Activated CD8-positive, alpha-beta T cell treated with anti-CD3 and anti-CD28 coated beads, Interleukin-2, amount 10 ng/mL, durations not matched to agents 7 days and 5 days (primary cell): ENCODE measurements at regions of chr1 and their contacts with region 1.

Region 1: GRCh38 chr1:168520052-168520751 is 23.6 kb downstream of the XCL2 start:
- DNase-seq: peak; percentile 85
- ATAC-seq: peak; percentile 89
- H3K4me3 Mint-ChIP-seq: peak overlapping the region; percentile 80
- H3K27ac Mint-ChIP-seq: peak overlapping the region; percentile 91
- H3K4me1 Mint-ChIP-seq: peaks cover 79% of the 10 kb centered on the region
- H3K27me3 Mint-ChIP-seq: no peaks in the 10 kb centered on the region

Region 2: GRCh38 chr1:168509875-168510791 is 10.1 kb before region 1 on chr1:
- CTCF ChIA-PET with region 1: interaction called, 10 read pairs
- POLR2A ChIA-PET with region 1: interaction called, 13 read pairs
- DNase-seq: peak; percentile 57
- ATAC-seq: peak; percentile 35
- H3K4me3 Mint-ChIP-seq: peak overlapping the region; percentile 1
- H3K27ac Mint-ChIP-seq: peak overlapping the region; percentile 94
- H3K4me1 Mint-ChIP-seq: peaks cover 95% of the 10 kb centered on the region
- H3K27me3 Mint-ChIP-seq: no peaks in the 10 kb centered on the region

Region 3: GRCh38 chr1:168535536-168535935 is 15.3 kb after region 1 on chr1:
- CTCF ChIA-PET with region 1: interaction called, 9 read pairs
- POLR2A ChIA-PET with region 1: interaction called, 31 read pairs
- DNase-seq: peak; percentile 75
- ATAC-seq: peak; percentile 89
- H3K4me3 Mint-ChIP-seq: peak overlapping the region; percentile 61
- H3K27ac Mint-ChIP-seq: peak overlapping the region; percentile 92
- H3K4me1 Mint-ChIP-seq: peaks cover 89% of the 10 kb centered on the region
- H3K27me3 Mint-ChIP-seq: no peaks in the 10 kb centered on the region